ENCODE measurements at regions of chr17 and their contacts with region 1.

Region 1: GRCh38 chr17:45098869-45099616 is 33.3 kb downstream of the PLCD3 start:
- DNase-seq: peak; percentile 93
- H3K4me3 ChIP-seq: no peak overlapping the region; a peak in 1 of 4 replicates
- H3K27ac ChIP-seq: peak overlapping the region in 1 of 2 experiments; percentile 19; a peak in 1 of 4 replicates
- H3K4me1 ChIP-seq: peaks cover 0 to under 1% of the 10 kb centered on the region in 2 experiments; a peak in 1 of 4 replicates
- H3K27me3 ChIP-seq: no peaks in the 10 kb centered on the region
- CTCF ChIP-seq: peak; percentile 91
- EP300 ChIP-seq: no peak
- RAD21 ChIP-seq: peak; percentile 83

Region 2: GRCh38 chr17:44878627-44879221 is 220.3 kb before region 1 on chr17:
- CTCF ChIA-PET with region 1: interaction called, 10 read pairs
- POLR2A ChIA-PET with region 1: no interaction called
- DNase-seq: peak; percentile 47
- H3K4me3 ChIP-seq: no peak overlapping the region; a peak in 1 of 4 replicates
- H3K27ac ChIP-seq: no peak overlapping the region; a peak in 1 of 4 replicates
- H3K4me1 ChIP-seq: no peaks in the 10 kb centered on the region
- H3K27me3 ChIP-seq: no peaks in the 10 kb centered on the region
- CTCF ChIP-seq: peak; percentile 80
- EP300 ChIP-seq: no peak
- RAD21 ChIP-seq: peak; percentile 61

Region 3: GRCh38 chr17:45021607-45022287 is 77.3 kb before region 1 on chr17:
- CTCF ChIA-PET with region 1: interaction called, 72 read pairs
- POLR2A ChIA-PET with region 1: no interaction called
- DNase-seq: peak; percentile 96
- H3K4me3 ChIP-seq: peak overlapping the region in 1 of 2 experiments; percentile 19; a peak in 1 of 4 replicates
- H3K27ac ChIP-seq: peak overlapping the region in 1 of 2 experiments; percentile 77; a peak in 2 of 4 replicates
- H3K4me1 ChIP-seq: peaks cover 10 to 34% of the 10 kb centered on the region in 2 experiments; a peak in 1 of 4 replicates
- H3K27me3 ChIP-seq: no peaks in the 10 kb centered on the region
- CTCF ChIP-seq: peak; percentile 88
- EP300 ChIP-seq: no peak
- RAD21 ChIP-seq: peak; percentile 77

Region 4: DNA sequence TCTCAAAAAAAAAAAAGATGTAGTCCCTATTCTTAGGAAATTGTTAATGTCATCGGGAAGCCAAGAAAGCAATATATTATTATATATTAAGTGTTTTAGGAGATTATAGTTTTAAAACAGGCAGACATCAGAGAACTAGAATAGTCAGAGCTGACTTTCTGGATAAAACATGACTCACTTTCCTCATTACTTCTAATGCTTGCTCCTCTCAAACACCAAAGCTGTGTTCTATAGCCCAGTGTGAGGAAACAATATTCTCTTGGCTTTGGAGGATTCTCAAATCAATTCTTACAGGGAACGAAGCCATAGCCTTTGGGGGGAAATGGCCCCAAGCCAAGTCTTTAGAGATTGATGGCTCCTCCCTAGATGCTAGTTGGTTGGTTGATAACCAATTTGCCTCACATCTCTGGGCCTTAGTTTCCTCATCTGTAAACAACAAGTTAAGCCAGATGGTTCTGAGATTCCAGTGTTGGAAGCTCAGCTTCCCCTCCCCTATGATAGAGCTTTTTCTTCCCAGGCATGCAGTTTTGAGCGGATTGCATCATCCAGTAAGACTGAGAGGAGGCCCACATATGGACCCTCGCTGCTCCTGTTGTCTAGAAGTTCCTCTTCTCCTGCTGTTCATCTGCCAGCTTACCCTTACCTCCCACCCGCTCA is 25.5 kb before region 1 on chr17:
- CTCF ChIA-PET with region 1: interaction called, 18 read pairs
- POLR2A ChIA-PET with region 1: no interaction called
- DNase-seq: no peak
- H3K4me3 ChIP-seq: no peak overlapping the region
- H3K27ac ChIP-seq: peak overlapping the region in 1 of 2 experiments; percentile 29; a peak in 1 of 4 replicates
- H3K4me1 ChIP-seq: peaks cover 0 to 3% of the 10 kb centered on the region in 2 experiments; a peak in 2 of 4 replicates
- H3K27me3 ChIP-seq: no peaks in the 10 kb centered on the region
- CTCF ChIP-seq: no peak
- EP300 ChIP-seq: no peak
- RAD21 ChIP-seq: no peak

Region 5: DNA sequence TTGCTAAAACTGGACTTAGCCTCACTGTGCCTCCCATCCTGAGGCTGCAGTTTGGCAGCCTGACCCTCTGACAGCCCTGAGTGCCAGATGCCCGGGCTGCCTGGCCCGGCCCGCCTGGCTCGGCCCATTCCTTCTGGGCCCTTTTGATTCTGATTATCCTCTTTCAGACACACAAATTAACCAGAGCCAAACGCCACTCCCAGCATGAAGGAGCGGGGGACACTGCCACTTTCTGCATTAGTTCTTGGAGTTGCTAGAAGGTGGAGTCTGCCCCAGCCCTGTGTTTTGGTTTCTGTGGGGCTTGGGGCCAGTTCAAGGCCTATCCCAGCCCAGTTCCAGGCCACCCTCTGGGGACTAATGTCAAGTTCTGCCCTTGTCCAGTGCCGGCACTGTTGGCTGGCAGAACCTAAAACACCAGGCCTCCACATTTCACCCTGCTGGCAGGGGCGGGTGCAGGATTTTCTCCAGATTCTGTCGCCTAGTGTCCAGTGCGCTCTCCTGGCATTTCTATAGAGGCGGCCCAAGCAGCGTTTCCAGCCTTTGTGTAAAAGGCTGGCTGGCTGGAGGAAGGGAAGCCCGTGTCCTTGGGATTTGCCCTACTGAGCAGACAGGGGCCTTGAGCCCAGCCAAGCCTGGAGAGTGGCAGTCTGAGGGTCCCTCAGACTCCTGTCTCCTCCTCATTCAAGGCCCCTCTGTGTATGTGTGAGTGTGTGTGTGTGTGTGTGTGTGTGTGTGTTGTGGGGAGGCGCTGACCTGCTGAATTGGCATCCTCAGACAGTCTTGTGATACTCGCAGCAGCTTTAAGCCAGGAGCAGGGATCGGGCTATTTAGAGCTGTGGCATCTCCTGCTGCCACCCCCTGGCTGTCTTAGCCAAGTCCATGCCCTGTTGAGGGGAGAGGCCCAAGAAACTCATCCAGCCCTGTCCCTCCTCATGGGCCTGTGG is 11.9 kb after region 1 on chr17:
- CTCF ChIA-PET with region 1: interaction called, 46 read pairs
- POLR2A ChIA-PET with region 1: no interaction called
- DNase-seq: peak; percentile 36
- H3K4me3 ChIP-seq: no peak overlapping the region
- H3K27ac ChIP-seq: no peak overlapping the region
- H3K4me1 ChIP-seq: peaks cover 0 to 13% of the 10 kb centered on the region in 2 experiments; a peak in 1 of 4 replicates
- H3K27me3 ChIP-seq: no peaks in the 10 kb centered on the region
- CTCF ChIP-seq: no peak
- EP300 ChIP-seq: no peak
- RAD21 ChIP-seq: no peak

Region 6: GRCh38 chr17:45172454-45173286 is 73.6 kb after region 1 on chr17:
- CTCF ChIA-PET with region 1: no interaction called
- POLR2A ChIA-PET with region 1: no interaction called
- DNase-seq: peak; percentile 93
- H3K4me3 ChIP-seq: peak overlapping the region; percentile 25 to 30; a peak in 3 of 4 replicates
- H3K27ac ChIP-seq: peak overlapping the region; percentile 89 to 94
- H3K4me1 ChIP-seq: peaks cover 29 to 40% of the 10 kb centered on the region in 2 experiments; a peak in 3 of 4 replicates
- H3K27me3 ChIP-seq: no peaks in the 10 kb centered on the region
- CTCF ChIP-seq: peak; percentile 28; the same call in 1 of the 2 replicates
- EP300 ChIP-seq: peak; percentile 34 to 66; a peak in 2 of 4 replicates
- RAD21 ChIP-seq: peak; percentile 6; the same call in 1 of the 2 replicates